Activated CD8-positive, alpha-beta T cell treated with anti-CD3 and anti-CD28 coated beads, Interleukin-2, amount 10 ng/mL, durations not matched to agents 7 days and 5 days (primary cell): ENCODE measurements at regions of chr12 and their contacts with region 1.

Region 1: DNA sequence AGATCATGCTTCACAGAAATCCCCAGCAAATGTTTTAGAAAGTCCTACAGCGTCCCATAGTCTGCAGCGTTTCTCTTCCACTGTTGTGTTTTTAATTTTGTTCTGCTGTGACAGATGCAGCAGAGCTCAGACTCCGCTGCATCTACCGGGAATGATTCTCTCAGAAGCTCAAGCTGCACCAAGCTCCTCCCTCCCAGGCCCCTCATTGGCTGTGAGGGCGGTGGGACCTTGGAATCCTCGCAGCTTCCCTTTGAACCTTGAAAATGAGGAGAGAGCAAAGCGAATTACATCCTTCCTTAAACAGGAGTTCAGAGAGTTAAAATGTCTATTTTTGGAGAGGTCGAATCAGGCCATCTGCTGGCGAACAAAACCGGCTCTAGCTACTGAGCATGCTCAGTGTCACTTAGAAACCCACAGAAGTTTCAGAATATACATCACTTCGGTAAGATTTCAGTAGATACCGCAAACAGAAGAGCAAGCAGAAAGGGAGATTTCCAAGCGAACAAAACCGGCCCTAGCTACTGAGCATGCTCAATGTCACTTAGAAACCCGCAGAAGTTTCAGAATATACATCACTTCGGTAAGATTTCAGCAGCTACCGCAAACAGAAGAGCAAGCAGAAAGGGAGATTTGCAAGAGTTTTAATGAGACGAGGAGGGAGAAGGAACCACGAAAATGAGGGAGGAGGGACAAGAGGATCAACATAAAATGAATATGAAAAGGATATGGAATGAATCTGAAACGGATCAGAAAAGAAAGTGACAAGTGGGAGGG is at the start of gene ABCD2:
- DNase-seq: peak; percentile 91
- ATAC-seq: peak; percentile 86
- H3K4me3 Mint-ChIP-seq: no peak within 1 kb of the TSS
- H3K27ac Mint-ChIP-seq: no peak within 1 kb of the TSS
- H3K4me1 Mint-ChIP-seq: peaks cover 28% of the 10 kb centered on the region
- H3K27me3 Mint-ChIP-seq: no peaks in the 10 kb centered on the region
- total RNA-seq, gene ABCD2: 22.5 to 24.4 TPM

Region 2: GRCh38 chr12:39595923-39596322 is 23.9 kb before region 1 on chr12:
- CTCF ChIA-PET with region 1: interaction called, 6 read pairs
- POLR2A ChIA-PET with region 1: interaction called, 10 read pairs
- DNase-seq: no peak
- ATAC-seq: no peak
- H3K4me3 Mint-ChIP-seq: no peak overlapping the region
- H3K27ac Mint-ChIP-seq: no peak overlapping the region
- H3K4me1 Mint-ChIP-seq: peaks cover 7% of the 10 kb centered on the region
- H3K27me3 Mint-ChIP-seq: no peaks in the 10 kb centered on the region

Region 3: GRCh38 chr12:39605501-39605900 is 14.3 kb before region 1 on chr12:
- CTCF ChIA-PET with region 1: interaction called, 12 read pairs
- POLR2A ChIA-PET with region 1: interaction called, 7 read pairs
- DNase-seq: no peak
- ATAC-seq: no peak
- H3K4me3 Mint-ChIP-seq: no peak overlapping the region
- H3K27ac Mint-ChIP-seq: no peak overlapping the region
- H3K4me1 Mint-ChIP-seq: peaks cover 32% of the 10 kb centered on the region
- H3K27me3 Mint-ChIP-seq: no peaks in the 10 kb centered on the region

Region 4: DNA sequence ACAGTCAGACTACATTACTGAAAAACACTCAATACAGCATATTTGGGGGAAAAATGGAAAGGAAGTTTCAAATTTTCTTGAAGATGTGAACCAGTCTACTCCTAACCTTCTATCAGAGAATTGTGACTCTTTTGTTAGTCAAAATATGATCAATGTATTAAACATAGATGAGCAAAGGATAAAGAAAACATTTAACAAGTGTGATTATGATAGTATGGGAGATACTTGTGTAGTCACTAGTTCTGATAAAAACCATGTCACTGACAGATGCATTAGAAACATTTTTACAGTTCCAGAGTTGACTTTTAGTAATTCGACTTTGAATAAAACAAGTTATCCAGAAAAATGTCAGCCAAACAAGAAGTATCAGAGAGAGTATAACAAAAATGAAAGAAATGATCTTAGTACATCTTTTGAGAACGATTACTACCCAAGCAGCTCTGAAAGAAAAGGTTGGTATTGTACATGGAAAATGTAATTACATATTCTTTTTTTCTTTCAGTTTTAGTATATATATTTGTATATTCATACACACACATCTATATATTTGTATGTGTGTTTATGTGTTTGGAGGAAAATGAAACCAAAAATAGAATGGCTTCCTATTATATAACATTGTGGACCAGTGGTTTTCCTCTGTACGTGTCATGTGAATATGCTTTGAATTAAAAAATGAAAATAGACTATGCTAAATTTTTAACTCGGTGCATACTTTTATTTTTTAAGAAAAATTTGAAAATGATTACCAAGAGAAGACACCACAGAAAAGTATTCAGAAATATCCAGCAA is 63.0 kb after region 1 on chr12:
- CTCF ChIA-PET with region 1: interaction called, 33 read pairs
- POLR2A ChIA-PET with region 1: interaction called, 36 read pairs
- DNase-seq: no peak
- ATAC-seq: peak; percentile 42
- H3K4me3 Mint-ChIP-seq: peak overlapping the region; percentile 73
- H3K27ac Mint-ChIP-seq: peak overlapping the region; percentile 87
- H3K4me1 Mint-ChIP-seq: peaks cover 51% of the 10 kb centered on the region
- H3K27me3 Mint-ChIP-seq: no peaks in the 10 kb centered on the region

Region 5: GRCh38 chr12:39692258-39692853 is 72.5 kb after region 1 on chr12:
- CTCF ChIA-PET with region 1: interaction called, 49 read pairs
- POLR2A ChIA-PET with region 1: interaction called, 9 read pairs
- DNase-seq: no peak
- ATAC-seq: no peak
- H3K4me3 Mint-ChIP-seq: no peak overlapping the region
- H3K27ac Mint-ChIP-seq: no peak overlapping the region
- H3K4me1 Mint-ChIP-seq: peaks cover 9% of the 10 kb centered on the region
- H3K27me3 Mint-ChIP-seq: no peaks in the 10 kb centered on the region